ENCODE measurements at regions of chr2 and their contacts with region 1.

Region 1: GRCh38 chr2:70301344-70302194 is at the start of gene FAM136A:
- DNase-seq: peak; percentile 92
- H3K4me3 Mint-ChIP-seq: peak within 1 kb of the TSS; percentile 85
- H3K27ac Mint-ChIP-seq: peak within 1 kb of the TSS; percentile 92
- H3K4me1 Mint-ChIP-seq: peaks cover 45% of the 10 kb centered on the region
- H3K27me3 Mint-ChIP-seq: peaks cover 10% of the 10 kb centered on the region

Region 2: DNA sequence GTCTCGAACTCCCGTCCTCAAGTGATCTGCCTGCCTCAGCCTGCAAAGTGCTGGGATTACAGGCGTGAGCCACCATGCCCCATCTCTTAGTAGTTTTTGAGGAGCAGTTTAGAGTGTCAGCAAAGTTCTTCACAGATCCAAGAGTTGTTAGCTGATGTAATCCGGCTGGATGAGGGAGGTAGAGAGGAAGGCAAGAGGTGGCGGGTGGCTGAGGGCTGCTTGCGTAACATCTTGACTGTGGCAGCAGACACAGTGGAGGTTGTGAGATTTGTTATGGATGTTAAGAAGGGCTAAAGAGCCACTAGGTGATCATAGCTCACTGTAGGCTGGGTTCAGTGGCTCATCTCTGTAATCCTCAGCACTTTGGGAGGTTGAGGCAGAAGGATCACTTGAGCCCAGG is 19.8 kb after region 1 on chr2:
- CTCF ChIA-PET with region 1: interaction called, 10 read pairs
- DNase-seq: no peak
- H3K4me3 Mint-ChIP-seq: no peak overlapping the region
- H3K27ac Mint-ChIP-seq: no peak overlapping the region
- H3K4me1 Mint-ChIP-seq: no peaks in the 10 kb centered on the region
- H3K27me3 Mint-ChIP-seq: peaks cover 28% of the 10 kb centered on the region

Region 3: DNA sequence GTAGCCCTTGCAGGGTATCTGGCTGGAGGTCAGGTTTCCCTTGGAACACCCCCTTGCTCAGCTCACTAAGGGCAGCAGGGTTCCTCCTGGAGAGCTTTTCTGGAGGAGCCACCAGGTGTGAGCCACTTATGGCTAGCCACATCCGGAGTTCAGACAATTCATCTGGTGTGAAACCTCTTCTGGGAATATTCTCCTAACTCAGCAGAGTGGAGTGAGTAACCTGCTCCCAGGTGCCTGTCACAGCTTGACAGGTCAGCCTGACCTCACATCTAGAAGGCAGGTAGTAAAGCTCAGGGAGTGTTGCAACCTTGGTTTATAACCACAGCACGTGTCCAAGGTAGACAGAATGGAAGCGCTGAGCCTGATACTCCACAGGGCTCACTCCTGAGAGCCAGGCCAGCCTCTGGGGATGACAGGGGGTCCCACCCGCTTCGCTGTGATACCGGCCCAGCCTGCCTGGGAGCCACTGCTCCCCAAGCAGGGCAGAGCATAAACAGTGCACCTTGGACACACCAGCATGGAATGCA is 314.7 kb after region 1 on chr2:
- CTCF ChIA-PET with region 1: interaction called, 53 read pairs
- DNase-seq: no peak
- H3K4me3 Mint-ChIP-seq: no peak overlapping the region
- H3K27ac Mint-ChIP-seq: no peak overlapping the region
- H3K4me1 Mint-ChIP-seq: peaks cover 3% of the 10 kb centered on the region
- H3K27me3 Mint-ChIP-seq: peaks cover 22% of the 10 kb centered on the region

Region 4: DNA sequence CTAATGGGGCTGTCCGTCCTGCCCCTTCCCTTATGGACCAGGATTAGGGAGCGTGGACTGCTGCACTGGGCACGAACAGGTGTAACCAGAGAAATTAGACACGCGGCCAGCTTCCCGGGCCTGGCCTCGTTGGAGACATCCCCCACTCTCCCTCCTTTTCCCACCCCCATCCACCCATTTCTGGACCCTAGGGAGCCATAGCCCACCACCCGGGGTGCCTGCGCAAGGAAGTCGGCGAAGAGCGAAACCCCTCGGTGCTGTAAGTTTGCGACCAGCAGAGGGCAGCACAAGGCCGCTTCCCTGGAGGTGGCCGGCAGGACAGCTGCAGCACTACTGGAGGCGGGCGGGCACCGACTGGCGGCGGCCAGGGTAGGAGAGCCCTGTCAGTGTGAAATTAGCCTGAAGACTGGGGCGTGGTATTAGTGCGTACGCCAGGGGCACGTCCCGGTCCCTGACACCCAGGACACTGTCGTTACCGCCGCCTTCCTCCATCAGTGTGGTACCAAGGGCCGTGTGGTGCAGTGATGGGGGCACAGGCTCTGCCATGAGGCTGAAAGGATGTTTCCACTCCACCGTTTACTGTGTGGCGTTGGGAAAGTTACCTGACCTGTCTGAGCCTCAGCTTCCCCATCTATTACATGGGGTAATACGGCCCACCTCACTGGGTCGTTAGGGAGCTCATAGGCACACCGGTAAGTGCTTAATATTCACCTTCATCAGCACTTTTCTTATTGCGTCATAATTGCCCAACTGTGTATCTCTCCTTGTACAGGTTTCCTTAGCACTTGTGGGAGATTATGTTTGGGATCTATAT is 570.0 kb after region 1 on chr2:
- CTCF ChIA-PET with region 1: interaction called, 13 read pairs
- DNase-seq: peak; percentile 87
- H3K4me3 Mint-ChIP-seq: no peak overlapping the region
- H3K27ac Mint-ChIP-seq: no peak overlapping the region
- H3K4me1 Mint-ChIP-seq: peaks cover 5% of the 10 kb centered on the region
- H3K27me3 Mint-ChIP-seq: peaks cover 69% of the 10 kb centered on the region

Measured in activated naive CD4-positive, alpha-beta T cell treated with anti-CD3 and anti-CD28 coated beads, Interleukin-2, amount 10 ng/mL, durations not matched to agents 7 days and 5 days (primary cell).